Activated CD8-positive, alpha-beta T cell treated with anti-CD3 and anti-CD28 coated beads for 36 hours (primary cell): ENCODE measurements at regions of chr10 and their contacts with region 1.

Region 1: GRCh38 chr10:37976091-37976879 is at the start of gene ZNF25:
- DNase-seq: peak; percentile 98
- ATAC-seq: peak; percentile 94
- H3K4me3 Mint-ChIP-seq: peak within 1 kb of the TSS; percentile 93
- H3K27ac Mint-ChIP-seq: peak within 1 kb of the TSS; percentile 94
- H3K4me1 Mint-ChIP-seq: peaks cover 19% of the 10 kb centered on the region
- H3K27me3 Mint-ChIP-seq: no peaks in the 10 kb centered on the region
- CTCF ChIP-seq: peak; percentile 76
- total RNA-seq, gene ZNF25: 7.5 to 8.8 TPM

Region 2: GRCh38 chr10:38010119-38010903 is 34.0 kb after region 1 on chr10 and contains the start of gene ZNF33A:
- CTCF ChIA-PET with region 1: interaction called, 6 read pairs
- POLR2A ChIA-PET with region 1: interaction called, 16 read pairs
- intact Hi-C with region 1: loop called (anchors 2 kb)
- DNase-seq: peak; percentile 94
- ATAC-seq: peak; percentile 86
- H3K4me3 Mint-ChIP-seq: peak within 1 kb of the TSS; percentile 93
- H3K27ac Mint-ChIP-seq: peak within 1 kb of the TSS; percentile 100
- H3K4me1 Mint-ChIP-seq: peaks cover 27% of the 10 kb centered on the region
- H3K27me3 Mint-ChIP-seq: no peaks in the 10 kb centered on the region
- CTCF ChIP-seq: no peak
- total RNA-seq, gene ZNF33A: 21.2 to 27.1 TPM

Region 3: GRCh38 chr10:38047666-38048065 is 71.4 kb after region 1 on chr10:
- CTCF ChIA-PET with region 1: no interaction called
- POLR2A ChIA-PET with region 1: no interaction called
- intact Hi-C with region 1: no loop called
- DNase-seq: no peak
- ATAC-seq: no peak
- H3K4me3 Mint-ChIP-seq: no peak overlapping the region
- H3K27ac Mint-ChIP-seq: no peak overlapping the region
- H3K4me1 Mint-ChIP-seq: peaks cover 29% of the 10 kb centered on the region
- H3K27me3 Mint-ChIP-seq: no peaks in the 10 kb centered on the region
- CTCF ChIP-seq: no peak

Region 4: GRCh38 chr10:38094158-38094920 is 118.1 kb after region 1 on chr10 and contains the start of gene ZNF37A:
- CTCF ChIA-PET with region 1: interaction called, 4 read pairs
- POLR2A ChIA-PET with region 1: interaction called, 6 read pairs
- intact Hi-C with region 1: loop called (anchors 1 kb)
- DNase-seq: peak; percentile 96
- ATAC-seq: peak; percentile 96
- H3K4me3 Mint-ChIP-seq: peak within 1 kb of the TSS; percentile 71
- H3K27ac Mint-ChIP-seq: peak within 1 kb of the TSS; percentile 90
- H3K4me1 Mint-ChIP-seq: peaks cover 28% of the 10 kb centered on the region
- H3K27me3 Mint-ChIP-seq: no peaks in the 10 kb centered on the region
- CTCF ChIP-seq: no peak
- total RNA-seq, gene ZNF37A: 22.6 to 26.0 TPM